T-cell (primary cell): ENCODE measurements at regions of chr10 and their contacts with region 1.

Region 1: DNA sequence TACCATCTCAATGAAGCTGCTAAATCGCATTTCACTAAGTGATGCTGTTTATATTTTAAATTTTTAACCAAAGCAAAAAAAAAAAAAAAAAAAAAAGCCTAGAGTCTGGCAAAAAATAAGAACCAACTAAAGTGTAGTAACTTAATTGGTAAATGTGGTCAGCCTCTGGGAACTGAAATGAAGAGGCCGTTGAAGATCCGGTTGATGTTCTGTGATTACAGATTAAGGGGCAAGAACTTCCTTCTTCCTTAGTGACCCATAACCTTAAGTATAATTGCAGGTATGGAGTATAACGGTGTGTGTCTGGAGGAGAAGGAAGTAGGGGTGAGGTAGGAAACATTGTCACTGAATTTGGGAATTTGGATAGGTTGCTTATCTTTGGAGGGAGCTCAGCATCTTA is 7.7 kb upstream of the SRGN start:
- DNase-seq: no peak
- ATAC-seq: no peak
- H3K4me3 ChIP-seq: no peak overlapping the region
- H3K4me3 Mint-ChIP-seq: no peak overlapping the region
- H3K27ac ChIP-seq: no peak overlapping the region
- H3K27ac Mint-ChIP-seq: no peak overlapping the region
- H3K4me1 ChIP-seq: no peaks in the 10 kb centered on the region
- H3K4me1 Mint-ChIP-seq: peaks cover 2 to 3% (median 3%) of the 10 kb centered on the region in 3 donors
- H3K27me3 ChIP-seq: no peaks in the 10 kb centered on the region
- H3K27me3 Mint-ChIP-seq: no peaks in the 10 kb centered on the region

Region 2: DNA sequence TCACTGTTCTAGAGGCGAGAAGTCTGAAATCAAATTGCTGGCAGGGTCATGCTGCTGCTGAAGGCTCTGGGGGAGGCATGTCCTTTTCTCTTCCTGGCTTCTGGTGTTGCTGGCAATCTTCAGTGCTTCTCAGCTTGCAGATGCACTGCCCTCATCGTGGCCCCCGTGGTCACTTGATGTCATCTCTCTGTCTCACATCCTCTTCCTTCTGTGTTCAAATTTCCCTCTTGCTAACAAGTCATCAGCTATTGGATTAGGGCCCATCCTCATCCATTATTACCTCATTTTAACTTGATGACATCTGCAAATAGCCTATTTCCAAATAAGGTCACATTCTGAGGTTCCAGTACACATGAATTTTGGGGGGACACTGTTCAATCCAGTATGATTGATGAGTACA is 28.9 kb before region 1 on chr10:
- CTCF ChIA-PET with region 1: no interaction called
- POLR2A ChIA-PET with region 1: interaction called in 1 of 2 experiments, 16 read pairs
- DNase-seq: peak in 2 of 35 experiments; percentile 6 to 43
- ATAC-seq: peak in 1 of 4 experiments; percentile 59
- H3K4me3 ChIP-seq: no peak overlapping the region
- H3K4me3 Mint-ChIP-seq: no peak overlapping the region
- H3K27ac ChIP-seq: no peak overlapping the region
- H3K27ac Mint-ChIP-seq: no peak overlapping the region
- H3K4me1 ChIP-seq: peaks cover 4 to 26% of the 10 kb centered on the region in 2 experiments
- H3K4me1 Mint-ChIP-seq: peaks cover 18 to 36% (median 30%) of the 10 kb centered on the region in 3 donors
- H3K27me3 ChIP-seq: no peaks in the 10 kb centered on the region
- H3K27me3 Mint-ChIP-seq: no peaks in the 10 kb centered on the region

Region 3: DNA sequence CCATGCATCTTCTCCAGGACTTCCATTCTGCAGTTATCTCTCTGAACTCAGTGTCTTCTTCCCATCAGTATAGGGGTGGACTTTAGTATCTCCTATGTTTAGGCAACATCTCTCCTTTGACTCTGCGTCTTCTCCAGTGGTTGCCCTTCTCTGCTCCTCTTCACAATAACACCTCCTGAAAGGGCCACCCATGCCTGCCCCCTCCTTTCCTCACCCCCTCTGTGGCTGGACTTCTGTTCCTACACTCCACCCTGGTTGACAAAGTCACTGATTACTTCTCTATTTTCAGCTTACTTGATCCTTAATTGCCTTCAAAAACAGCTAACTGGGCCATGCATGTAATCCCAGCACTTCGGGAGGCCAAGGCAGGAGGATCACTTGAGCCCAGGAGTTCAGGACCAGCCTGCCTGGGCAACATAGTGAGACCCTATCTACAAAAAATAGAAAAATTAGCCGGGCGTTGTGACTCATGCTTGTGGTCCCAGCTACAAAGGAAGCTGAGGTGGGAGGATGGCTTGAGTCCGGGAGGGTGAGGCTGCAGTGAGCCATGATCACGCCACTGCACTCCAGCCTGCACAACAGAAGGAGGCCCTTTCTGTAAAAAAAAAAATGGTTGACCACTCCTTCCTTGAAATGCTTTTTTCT is 21.3 kb after region 1 on chr10:
- CTCF ChIA-PET with region 1: interaction called in 1 of 2 experiments, 3 read pairs
- POLR2A ChIA-PET with region 1: interaction called in 1 of 2 experiments, 12 read pairs
- DNase-seq: peak in 6 of 35 experiments; percentile 10 to 38 (median 28)
- ATAC-seq: peak; percentile 8 to 80 (median 58)
- H3K4me3 ChIP-seq: no peak overlapping the region
- H3K4me3 Mint-ChIP-seq: peak overlapping the region in 1 of 3 donors; percentile 43
- H3K27ac ChIP-seq: peak overlapping the region; percentile 0
- H3K27ac Mint-ChIP-seq: peak overlapping the region; percentile 76 to 81
- H3K4me1 ChIP-seq: peaks cover 2 to 29% of the 10 kb centered on the region in 2 experiments
- H3K4me1 Mint-ChIP-seq: peaks cover 33 to 46% (median 33%) of the 10 kb centered on the region in 3 donors
- H3K27me3 ChIP-seq: no peaks in the 10 kb centered on the region
- H3K27me3 Mint-ChIP-seq: no peaks in the 10 kb centered on the region